Activated CD4-positive, alpha-beta memory T cell treated with anti-CD3 and anti-CD28 coated beads for 36 hours (primary cell): ENCODE measurements at regions of chr17 and their contacts with region 1.

Region 1: GRCh38 chr17:2814481-2815341 is 18.5 kb downstream of the RAP1GAP2 start:
- DNase-seq: peak; percentile 95
- H3K4me3 Mint-ChIP-seq: peak overlapping the region; percentile 13
- H3K27ac Mint-ChIP-seq: peak overlapping the region; percentile 23
- H3K4me1 Mint-ChIP-seq: peaks cover 17% of the 10 kb centered on the region
- H3K27me3 Mint-ChIP-seq: peaks cover 6% of the 10 kb centered on the region

Region 2: GRCh38 chr17:2711601-2712299 is 103.0 kb before region 1 on chr17 and contains the start of gene CLUH:
- CTCF ChIA-PET with region 1: no interaction called
- POLR2A ChIA-PET with region 1: no interaction called
- intact Hi-C with region 1: loop called (anchors 2 kb)
- DNase-seq: peak; percentile 98
- H3K4me3 Mint-ChIP-seq: peak within 1 kb of the TSS; percentile 88
- H3K27ac Mint-ChIP-seq: peak within 1 kb of the TSS; percentile 82
- H3K4me1 Mint-ChIP-seq: peaks cover 34% of the 10 kb centered on the region
- H3K27me3 Mint-ChIP-seq: no peaks in the 10 kb centered on the region
- total RNA-seq, gene CLUH: 78.4 to 80.4 TPM

Region 3: DNA sequence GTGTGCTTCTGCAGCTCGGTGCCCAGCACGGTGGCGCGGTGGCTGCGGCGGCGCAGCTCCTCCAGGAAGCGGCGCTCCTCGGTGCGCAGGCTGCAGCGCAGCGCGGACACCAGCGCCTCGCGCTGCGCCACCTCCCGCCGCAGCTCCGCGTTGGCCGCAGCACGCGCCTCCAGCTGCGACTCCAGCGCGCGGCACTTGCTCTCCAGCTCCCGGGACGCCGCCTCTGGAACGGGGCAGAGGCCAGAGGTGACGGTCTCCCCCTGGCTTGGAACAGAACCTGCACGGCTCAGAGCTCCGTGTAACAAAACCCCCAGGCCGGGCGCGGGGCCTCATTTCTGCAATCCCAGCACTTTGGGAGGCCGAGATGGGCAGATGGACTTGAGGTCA is 89.9 kb before region 1 on chr17:
- CTCF ChIA-PET with region 1: no interaction called
- POLR2A ChIA-PET with region 1: no interaction called
- intact Hi-C with region 1: no loop called
- DNase-seq: peak; percentile 54
- H3K4me3 Mint-ChIP-seq: no peak overlapping the region
- H3K27ac Mint-ChIP-seq: no peak overlapping the region
- H3K4me1 Mint-ChIP-seq: peaks cover 8% of the 10 kb centered on the region
- H3K27me3 Mint-ChIP-seq: peaks cover 11% of the 10 kb centered on the region

Region 4: GRCh38 chr17:2796164-2797125 is 18.3 kb before region 1 on chr17 and contains the start of gene RAP1GAP2:
- CTCF ChIA-PET with region 1: interaction called, 9 read pairs
- POLR2A ChIA-PET with region 1: interaction called, 15 read pairs
- intact Hi-C with region 1: loop called (anchors 1 kb)
- DNase-seq: peak; percentile 80
- H3K4me3 Mint-ChIP-seq: peak within 1 kb of the TSS; percentile 74
- H3K27ac Mint-ChIP-seq: no peak within 1 kb of the TSS
- H3K4me1 Mint-ChIP-seq: peaks cover 66% of the 10 kb centered on the region
- H3K27me3 Mint-ChIP-seq: peaks cover 17% of the 10 kb centered on the region
- total RNA-seq, gene RAP1GAP2: 1.9 to 2.3 TPM